Activated CD8-positive, alpha-beta T cell treated with anti-CD3 and anti-CD28 coated beads, Interleukin-2, amount 10 ng/mL, durations not matched to agents 7 days and 5 days (primary cell): ENCODE measurements at regions of chr13 and their contacts with region 1.

Region 1: GRCh38 chr13:75482070-75482819 is at the start of gene TBC1D4:
- DNase-seq: peak; percentile 73
- ATAC-seq: peak; percentile 84
- H3K4me3 Mint-ChIP-seq: peak within 1 kb of the TSS; percentile 89
- H3K27ac Mint-ChIP-seq: no peak within 1 kb of the TSS
- H3K4me1 Mint-ChIP-seq: peaks cover 20% of the 10 kb centered on the region
- H3K27me3 Mint-ChIP-seq: peaks cover 53% of the 10 kb centered on the region
- total RNA-seq, gene TBC1D4: 12.7 to 13.4 TPM

Region 2: GRCh38 chr13:75372517-75372916 is 109.7 kb before region 1 on chr13:
- CTCF ChIA-PET with region 1: interaction called, 14 read pairs
- POLR2A ChIA-PET with region 1: no interaction called
- DNase-seq: no peak
- ATAC-seq: peak; percentile 36
- H3K4me3 Mint-ChIP-seq: no peak overlapping the region
- H3K27ac Mint-ChIP-seq: no peak overlapping the region
- H3K4me1 Mint-ChIP-seq: no peaks in the 10 kb centered on the region
- H3K27me3 Mint-ChIP-seq: peaks cover 1% of the 10 kb centered on the region

Region 3: DNA sequence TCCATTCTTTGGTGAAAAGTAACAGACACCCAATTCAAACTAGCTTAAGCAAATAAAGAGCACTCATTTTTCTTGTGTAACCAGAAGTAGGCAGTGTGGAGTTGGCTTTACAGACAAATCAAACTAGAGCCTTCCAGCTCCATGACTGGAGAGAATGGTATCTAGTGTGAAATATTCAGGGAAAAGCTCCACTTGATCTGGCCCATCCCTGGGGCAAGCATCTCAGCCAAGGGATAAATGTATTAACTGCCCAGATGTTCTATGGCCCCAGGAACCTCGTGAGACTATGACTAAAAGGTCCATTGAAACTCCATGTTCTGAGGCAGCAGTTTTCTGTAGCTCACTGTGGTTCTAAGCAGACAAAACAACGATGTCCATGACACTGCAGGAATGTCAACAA is 50.2 kb before region 1 on chr13:
- CTCF ChIA-PET with region 1: no interaction called
- POLR2A ChIA-PET with region 1: no interaction called
- DNase-seq: no peak
- ATAC-seq: no peak
- H3K4me3 Mint-ChIP-seq: no peak overlapping the region
- H3K27ac Mint-ChIP-seq: no peak overlapping the region
- H3K4me1 Mint-ChIP-seq: no peaks in the 10 kb centered on the region
- H3K27me3 Mint-ChIP-seq: peaks cover 14% of the 10 kb centered on the region

Region 4: GRCh38 chr13:75549262-75550158 is 67.3 kb after region 1 on chr13 and contains the start of gene UCHL3:
- CTCF ChIA-PET with region 1: interaction called, 14 read pairs
- POLR2A ChIA-PET with region 1: no interaction called
- DNase-seq: peak; percentile 98
- ATAC-seq: peak; percentile 95
- H3K4me3 Mint-ChIP-seq: peak within 1 kb of the TSS; percentile 88
- H3K27ac Mint-ChIP-seq: peak within 1 kb of the TSS; percentile 95
- H3K4me1 Mint-ChIP-seq: peaks cover 28% of the 10 kb centered on the region
- H3K27me3 Mint-ChIP-seq: no peaks in the 10 kb centered on the region
- total RNA-seq, gene UCHL3: 36.4 to 38.1 TPM

Region 5: GRCh38 chr13:75993823-75994222 is 511.6 kb after region 1 on chr13:
- CTCF ChIA-PET with region 1: no interaction called
- POLR2A ChIA-PET with region 1: no interaction called
- DNase-seq: no peak
- ATAC-seq: no peak
- H3K4me3 Mint-ChIP-seq: no peak overlapping the region
- H3K27ac Mint-ChIP-seq: no peak overlapping the region
- H3K4me1 Mint-ChIP-seq: no peaks in the 10 kb centered on the region
- H3K27me3 Mint-ChIP-seq: no peaks in the 10 kb centered on the region